Activated CD4-positive, alpha-beta memory T cell treated with anti-CD3 and anti-CD28 coated beads for 36 hours (primary cell): ENCODE measurements at regions of chr3 and their contacts with region 1.

Region 1: GRCh38 chr3:117997201-117998049 is 1037.2 kb downstream of the IGSF11 start:
- DNase-seq: peak; percentile 67
- H3K4me3 Mint-ChIP-seq: no peak overlapping the region
- H3K27ac Mint-ChIP-seq: no peak overlapping the region
- H3K4me1 Mint-ChIP-seq: no peaks in the 10 kb centered on the region
- H3K27me3 Mint-ChIP-seq: peaks cover 2% of the 10 kb centered on the region

Region 2: GRCh38 chr3:116863822-116864589 is 1133.4 kb before region 1 on chr3:
- CTCF ChIA-PET with region 1: no interaction called
- POLR2A ChIA-PET with region 1: no interaction called
- intact Hi-C with region 1: loop called (anchors 10 kb)
- DNase-seq: no peak
- H3K4me3 Mint-ChIP-seq: no peak overlapping the region
- H3K27ac Mint-ChIP-seq: no peak overlapping the region
- H3K4me1 Mint-ChIP-seq: no peaks in the 10 kb centered on the region
- H3K27me3 Mint-ChIP-seq: no peaks in the 10 kb centered on the region